Natural killer cell (primary cell): ENCODE measurements at regions of chr1 and their contacts with region 1.

Region 1: DNA sequence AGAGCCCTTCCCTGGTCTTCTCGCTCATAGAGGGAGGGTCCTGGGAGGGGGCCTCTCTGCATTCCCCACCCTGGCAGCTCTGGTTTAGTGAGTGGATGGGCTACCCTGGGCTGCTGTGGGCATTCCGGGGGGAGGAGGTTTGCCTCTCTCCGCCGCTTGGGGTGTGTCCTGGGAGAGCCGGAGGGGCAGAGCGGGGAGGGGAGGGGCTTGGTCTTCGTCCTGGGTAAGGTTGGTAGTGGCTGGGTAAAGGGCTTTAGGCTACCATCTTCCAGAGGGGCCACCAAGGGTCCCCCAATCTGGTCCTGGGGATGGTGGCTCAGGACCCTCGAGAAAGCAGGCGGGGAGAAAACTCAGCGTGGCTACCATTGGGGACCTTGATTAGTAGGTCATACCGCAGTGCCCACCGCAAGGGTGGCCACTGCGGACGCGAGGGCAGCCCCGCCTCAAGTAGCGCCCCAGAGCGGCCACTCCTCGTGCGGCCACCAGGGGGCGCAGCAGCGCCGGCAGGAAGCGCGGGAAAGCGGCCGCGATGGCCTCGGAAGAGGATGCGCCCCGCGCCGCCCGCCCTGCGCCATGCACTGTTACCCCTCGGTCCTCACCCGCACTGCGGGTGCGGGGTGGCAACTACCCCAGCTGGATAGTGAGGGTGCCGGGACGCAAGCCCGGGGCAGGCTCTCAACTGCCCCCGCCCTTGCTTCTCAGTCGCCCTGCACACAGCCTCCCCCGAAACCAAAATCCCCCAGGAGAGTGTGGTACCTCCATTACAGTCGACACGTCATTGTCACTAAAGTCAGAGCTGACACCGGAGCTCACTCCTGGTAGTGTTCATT is 44.1 kb upstream of the SLC25A33 start:
- DNase-seq: peak; percentile 65 to 85
- ATAC-seq: peak; percentile 76 to 85 (median 78)
- H3K4me3 ChIP-seq: no peak overlapping the region
- H3K4me3 Mint-ChIP-seq: peak overlapping the region; percentile 25
- H3K27ac ChIP-seq: no peak overlapping the region
- H3K27ac Mint-ChIP-seq: no peak overlapping the region
- H3K4me1 ChIP-seq: peaks cover 10% of the 10 kb centered on the region
- H3K4me1 Mint-ChIP-seq: peaks cover 0 to 7% of the 10 kb centered on the region in 2 donors
- H3K27me3 ChIP-seq: no peaks in the 10 kb centered on the region
- H3K27me3 Mint-ChIP-seq: peaks cover 0 to 15% of the 10 kb centered on the region in 2 donors
- CTCF ChIP-seq: peak; percentile 99

Region 2: GRCh38 chr1:9110669-9111356 is 384.3 kb before region 1 on chr1:
- intact Hi-C with region 1: loop called (anchors 2 kb)
- DNase-seq: peak; percentile 71 to 88
- ATAC-seq: peak; percentile 78 to 87 (median 79)
- H3K4me3 ChIP-seq: no peak overlapping the region
- H3K4me3 Mint-ChIP-seq: no peak overlapping the region
- H3K27ac ChIP-seq: no peak overlapping the region
- H3K27ac Mint-ChIP-seq: no peak overlapping the region
- H3K4me1 ChIP-seq: no peaks in the 10 kb centered on the region
- H3K4me1 Mint-ChIP-seq: no peaks in the 10 kb centered on the region
- H3K27me3 ChIP-seq: no peaks in the 10 kb centered on the region
- H3K27me3 Mint-ChIP-seq: no peaks in the 10 kb centered on the region
- CTCF ChIP-seq: peak; percentile 76

Region 3: DNA sequence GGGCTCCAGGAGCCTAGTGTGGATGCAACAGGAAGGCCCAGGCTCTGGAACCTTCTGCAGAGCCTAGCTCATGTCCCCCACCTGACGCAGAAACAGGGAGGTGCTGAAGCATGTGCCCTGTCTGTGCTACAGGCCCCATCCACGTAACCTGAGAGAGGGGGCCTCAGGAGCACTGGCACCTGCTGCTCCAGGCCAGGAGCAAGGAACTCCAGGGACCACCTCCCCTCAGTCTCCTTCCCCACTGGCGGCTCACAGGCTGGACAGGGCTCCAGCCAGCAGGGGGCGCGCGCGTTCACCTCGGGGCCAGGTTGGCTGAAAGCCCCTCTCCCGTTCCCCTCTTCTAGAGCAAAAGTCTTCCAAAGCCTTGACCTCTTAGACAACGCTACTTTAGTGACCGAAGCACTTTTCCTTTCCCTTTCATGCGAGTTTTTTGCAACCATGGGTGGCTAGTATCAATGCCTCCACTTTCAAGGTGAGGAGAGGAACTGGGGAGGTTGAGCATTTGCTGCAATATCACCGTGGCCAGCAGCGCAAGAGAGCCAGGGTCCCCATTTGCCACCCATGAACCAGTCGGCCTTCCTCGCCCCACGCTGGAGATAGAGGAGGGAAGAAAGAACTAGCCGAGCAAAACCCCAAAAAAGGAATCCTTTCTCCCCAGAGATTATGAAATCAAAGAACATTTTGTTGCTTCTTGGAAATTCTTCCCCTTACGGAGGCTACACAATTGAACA is 313.8 kb before region 1 on chr1:
- intact Hi-C with region 1: loop called (anchors 1 kb)
- DNase-seq: peak; percentile 68 to 72
- ATAC-seq: peak; percentile 40 to 80 (median 68)
- H3K4me3 ChIP-seq: no peak overlapping the region
- H3K4me3 Mint-ChIP-seq: peak overlapping the region; percentile 49
- H3K27ac ChIP-seq: no peak overlapping the region
- H3K27ac Mint-ChIP-seq: no peak overlapping the region
- H3K4me1 ChIP-seq: peaks cover 13% of the 10 kb centered on the region
- H3K4me1 Mint-ChIP-seq: peaks cover 0 to 5% of the 10 kb centered on the region in 2 donors
- H3K27me3 ChIP-seq: peaks cover 12% of the 10 kb centered on the region
- H3K27me3 Mint-ChIP-seq: peaks cover 7 to 14% of the 10 kb centered on the region in 2 donors
- CTCF ChIP-seq: peak; percentile 94

Region 4: DNA sequence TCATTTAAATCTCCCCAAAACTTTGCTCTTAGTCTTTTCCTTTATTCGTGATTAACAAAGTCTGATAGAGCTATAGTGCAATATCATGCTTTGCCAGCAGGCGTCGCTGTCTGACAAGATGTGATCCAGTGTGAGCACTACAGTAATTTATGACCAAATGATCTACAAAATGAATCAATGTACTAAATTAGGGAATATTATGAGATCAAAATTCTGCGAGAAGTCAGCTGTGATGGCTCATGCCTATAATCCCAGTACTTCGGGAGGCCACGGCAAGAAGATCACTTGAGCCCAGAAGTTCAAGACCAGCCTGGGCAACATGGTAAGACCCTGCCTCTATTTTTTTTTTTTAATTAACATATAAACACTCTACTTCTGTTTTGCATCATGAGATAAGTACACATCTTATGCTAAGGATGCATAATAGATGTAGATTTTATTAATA is 206.0 kb before region 1 on chr1:
- intact Hi-C with region 1: loop called (anchors 1 kb)
- DNase-seq: peak; percentile 76 to 89
- ATAC-seq: peak; percentile 32 to 56 (median 32)
- H3K4me3 ChIP-seq: no peak overlapping the region
- H3K4me3 Mint-ChIP-seq: peak overlapping the region; percentile 21
- H3K27ac ChIP-seq: no peak overlapping the region
- H3K27ac Mint-ChIP-seq: no peak overlapping the region
- H3K4me1 ChIP-seq: peaks cover 8% of the 10 kb centered on the region
- H3K4me1 Mint-ChIP-seq: peaks cover 14 to 29% of the 10 kb centered on the region in 2 donors
- H3K27me3 ChIP-seq: no peaks in the 10 kb centered on the region
- H3K27me3 Mint-ChIP-seq: no peaks in the 10 kb centered on the region
- CTCF ChIP-seq: peak; percentile 95

Region 5: GRCh38 chr1:9529190-9529589 is 34.0 kb after region 1 on chr1:
- intact Hi-C with region 1: no loop called
- DNase-seq: no peak
- ATAC-seq: no peak
- H3K4me3 ChIP-seq: no peak overlapping the region
- H3K4me3 Mint-ChIP-seq: no peak overlapping the region
- H3K27ac ChIP-seq: no peak overlapping the region
- H3K27ac Mint-ChIP-seq: no peak overlapping the region
- H3K4me1 ChIP-seq: peaks cover 4% of the 10 kb centered on the region
- H3K4me1 Mint-ChIP-seq: no peaks in the 10 kb centered on the region
- H3K27me3 ChIP-seq: no peaks in the 10 kb centered on the region
- H3K27me3 Mint-ChIP-seq: no peaks in the 10 kb centered on the region
- CTCF ChIP-seq: no peak

Region 6: DNA sequence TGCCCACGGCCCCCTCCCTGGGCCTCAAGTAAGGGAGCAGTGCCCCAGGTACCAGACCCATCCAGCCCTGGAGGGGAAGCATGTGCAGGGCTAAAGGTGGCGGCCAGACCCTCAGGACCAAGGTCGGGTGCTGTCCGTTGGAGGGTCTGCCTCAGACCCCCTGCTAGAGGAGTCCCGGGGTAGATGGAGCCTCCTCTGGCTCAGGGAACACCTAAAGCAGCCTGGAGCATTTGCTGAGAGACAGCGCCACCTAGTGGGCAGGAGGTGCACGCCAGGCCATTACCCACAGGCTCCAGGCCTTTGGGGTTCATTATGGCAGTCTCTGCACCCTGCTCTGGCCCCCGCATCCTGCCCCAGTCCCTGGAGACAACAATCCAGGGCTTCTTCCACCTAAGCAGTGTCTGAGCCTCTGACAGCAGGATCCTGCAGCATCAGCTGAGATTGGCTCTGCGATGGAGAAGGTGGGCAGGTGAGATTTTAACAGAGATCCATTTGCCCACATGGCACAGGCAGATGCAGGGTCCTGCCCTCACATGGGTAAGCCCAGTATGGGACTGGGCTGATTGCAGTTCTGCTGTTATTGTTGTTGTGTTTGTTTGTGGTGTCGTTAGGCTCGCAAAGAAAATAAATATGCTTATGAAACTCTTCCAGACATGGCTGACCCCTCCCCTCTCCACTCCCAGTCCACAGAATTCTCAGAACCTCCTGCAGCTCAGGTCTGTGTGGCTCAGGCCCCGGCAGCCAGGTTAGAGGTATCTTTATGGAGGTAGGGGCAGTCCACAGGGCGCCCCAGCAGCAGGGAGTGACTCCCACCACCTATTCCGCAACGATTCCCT is 372.5 kb after region 1 on chr1:
- intact Hi-C with region 1: loop called (anchors 1 kb)
- DNase-seq: peak; percentile 88 to 94
- ATAC-seq: peak; percentile 91 to 100 (median 98)
- H3K4me3 ChIP-seq: no peak overlapping the region
- H3K4me3 Mint-ChIP-seq: no peak overlapping the region
- H3K27ac ChIP-seq: no peak overlapping the region
- H3K27ac Mint-ChIP-seq: no peak overlapping the region
- H3K4me1 ChIP-seq: peaks cover 6% of the 10 kb centered on the region
- H3K4me1 Mint-ChIP-seq: peaks cover 4 to 8% of the 10 kb centered on the region in 2 donors
- H3K27me3 ChIP-seq: no peaks in the 10 kb centered on the region
- H3K27me3 Mint-ChIP-seq: no peaks in the 10 kb centered on the region
- CTCF ChIP-seq: peak; percentile 91